Heart left ventricle (tissue), 16 donors: ENCODE measurements at regions of chr14 and their contacts with region 1.

Region 1: DNA sequence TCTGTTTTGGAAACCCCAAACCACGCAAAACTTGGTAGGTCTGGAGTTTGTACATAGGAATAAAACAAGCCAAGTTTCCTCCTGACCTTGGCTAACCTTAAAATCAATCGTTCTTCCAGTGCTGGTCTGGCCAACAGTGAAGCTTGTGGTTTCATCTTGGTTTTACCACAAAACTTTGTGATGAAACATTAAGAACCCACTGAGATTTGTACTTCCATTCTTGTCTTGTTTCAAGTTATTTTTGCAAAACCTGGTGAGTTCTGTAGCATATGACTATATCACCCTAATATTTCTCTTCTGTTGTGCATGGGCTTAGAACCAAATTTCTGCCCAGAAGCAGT is 26.4 kb downstream of the SIX1 start:
- DNase-seq: no peak
- ATAC-seq: no peak
- H3K4me3 ChIP-seq: no peak overlapping the region
- H3K27ac ChIP-seq: peak overlapping the region in 1 of 12 donors; percentile 15
- H3K4me1 ChIP-seq: no peaks in the 10 kb centered on the region
- H3K27me3 ChIP-seq: peaks cover 0 to 19% (median 4%) of the 10 kb centered on the region in 9 donors
- CTCF ChIP-seq: no peak
- POLR2A ChIP-seq: no peak

Region 2: DNA sequence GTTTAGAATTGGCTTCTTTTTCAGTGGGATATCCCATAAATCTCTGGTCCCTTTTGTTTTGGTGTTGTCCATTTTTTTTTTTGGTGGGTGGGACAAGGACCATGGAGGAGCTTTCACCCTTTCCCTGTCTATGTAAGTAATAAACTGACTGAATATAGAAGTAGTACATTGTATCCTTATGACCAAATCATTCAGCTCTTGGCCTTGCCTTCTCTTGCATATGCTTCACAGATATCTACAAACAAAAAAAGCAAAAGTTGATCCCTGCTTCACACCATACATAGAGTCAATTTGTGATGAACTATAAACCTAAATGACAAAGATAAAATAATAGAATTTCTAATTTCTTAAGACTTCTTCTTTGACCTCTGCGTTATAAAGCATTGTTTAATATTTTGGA is 33.4 kb before region 1 on chr14:
- intact Hi-C with region 1: no loop called
- DNase-seq: no peak
- ATAC-seq: no peak
- H3K4me3 ChIP-seq: no peak overlapping the region
- H3K27ac ChIP-seq: no peak overlapping the region
- H3K4me1 ChIP-seq: no peaks in the 10 kb centered on the region
- H3K27me3 ChIP-seq: no peaks in the 10 kb centered on the region
- CTCF ChIP-seq: no peak
- POLR2A ChIP-seq: no peak

Region 3: GRCh38 chr14:60970146-60970545 is 347.3 kb after region 1 on chr14:
- intact Hi-C with region 1: no loop called
- DNase-seq: no peak
- ATAC-seq: no peak
- H3K4me3 ChIP-seq: no peak overlapping the region
- H3K27ac ChIP-seq: no peak overlapping the region
- H3K4me1 ChIP-seq: no peaks in the 10 kb centered on the region
- H3K27me3 ChIP-seq: no peaks in the 10 kb centered on the region
- CTCF ChIP-seq: no peak
- POLR2A ChIP-seq: no peak

Region 4: GRCh38 chr14:61252369-61253063 is 629.6 kb after region 1 on chr14:
- intact Hi-C with region 1: loop called (anchors 1 to 2 kb)
- DNase-seq: peak in 4 of 5 donors; percentile 60 to 73 (median 67)
- ATAC-seq: peak; percentile 89 to 97 (median 96)
- H3K4me3 ChIP-seq: no peak overlapping the region
- H3K27ac ChIP-seq: no peak overlapping the region
- H3K4me1 ChIP-seq: peaks cover 0 to 5% (median 0%) of the 10 kb centered on the region in 12 donors
- H3K27me3 ChIP-seq: peaks cover 0 to 4% (median 0%) of the 10 kb centered on the region in 9 donors
- CTCF ChIP-seq: peak; percentile 64 to 89 (median 82)
- POLR2A ChIP-seq: no peak